CD4-positive, alpha-beta T cell (primary cell): ENCODE measurements at regions of chr3 and their contacts with region 1.

Region 1: DNA sequence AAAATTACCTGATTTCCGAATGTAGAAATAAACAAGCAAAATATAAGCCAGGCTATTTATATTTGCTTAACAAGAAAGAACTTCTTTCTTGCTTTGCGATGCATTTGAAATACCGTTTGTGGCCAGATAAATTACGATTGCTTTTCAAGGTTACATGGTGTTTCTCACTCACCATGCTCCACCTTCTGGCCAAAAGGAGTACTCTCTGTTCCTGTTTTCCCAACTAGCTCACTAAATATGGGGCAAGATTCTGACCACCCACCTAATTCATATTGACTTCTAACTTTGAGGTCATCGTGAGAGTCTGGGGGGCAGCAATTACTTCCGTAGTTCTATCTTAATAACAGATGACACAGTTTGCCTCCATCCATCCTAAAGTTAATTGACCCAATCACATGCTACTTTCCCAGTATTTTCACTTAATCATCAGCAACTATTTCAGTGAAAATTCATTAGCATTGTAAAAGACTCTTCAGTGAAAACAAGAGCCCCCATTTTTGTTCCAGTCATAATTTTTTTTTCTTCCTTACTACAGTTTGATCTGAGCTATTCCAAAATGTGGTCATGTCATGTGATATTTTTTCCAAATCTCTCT is 25.9 kb downstream of the ACP3 start:
- DNase-seq: peak in 4 of 14 experiments; percentile 19 to 61 (median 48)
- ATAC-seq: no peak
- H3K4me3 ChIP-seq: no peak overlapping the region
- H3K4me3 Mint-ChIP-seq: no peak overlapping the region
- H3K27ac ChIP-seq: no peak overlapping the region
- H3K27ac Mint-ChIP-seq: no peak overlapping the region
- H3K4me1 ChIP-seq: no peaks in the 10 kb centered on the region
- H3K4me1 Mint-ChIP-seq: no peaks in the 10 kb centered on the region
- H3K27me3 ChIP-seq: peaks cover 0 to 6% of the 10 kb centered on the region in 2 experiments
- H3K27me3 Mint-ChIP-seq: peaks cover 25% of the 10 kb centered on the region
- CTCF ChIP-seq: peak; percentile 71

Region 2: GRCh38 chr3:132253262-132253878 is 89.7 kb before region 1 on chr3:
- CTCF ChIA-PET with region 1: no interaction called
- POLR2A ChIA-PET with region 1: no interaction called
- intact Hi-C with region 1: loop called (anchors 5 kb)
- DNase-seq: peak in 3 of 14 experiments; percentile 28 to 46 (median 44)
- ATAC-seq: no peak
- H3K4me3 ChIP-seq: no peak overlapping the region
- H3K4me3 Mint-ChIP-seq: no peak overlapping the region
- H3K27ac ChIP-seq: no peak overlapping the region
- H3K27ac Mint-ChIP-seq: no peak overlapping the region
- H3K4me1 ChIP-seq: no peaks in the 10 kb centered on the region
- H3K4me1 Mint-ChIP-seq: no peaks in the 10 kb centered on the region
- H3K27me3 ChIP-seq: peaks cover 0 to 6% of the 10 kb centered on the region in 2 experiments
- H3K27me3 Mint-ChIP-seq: peaks cover 3% of the 10 kb centered on the region
- CTCF ChIP-seq: peak; percentile 60